PC-3 (cell line): ENCODE measurements at regions of chr2 and their contacts with region 1.

Region 1: DNA sequence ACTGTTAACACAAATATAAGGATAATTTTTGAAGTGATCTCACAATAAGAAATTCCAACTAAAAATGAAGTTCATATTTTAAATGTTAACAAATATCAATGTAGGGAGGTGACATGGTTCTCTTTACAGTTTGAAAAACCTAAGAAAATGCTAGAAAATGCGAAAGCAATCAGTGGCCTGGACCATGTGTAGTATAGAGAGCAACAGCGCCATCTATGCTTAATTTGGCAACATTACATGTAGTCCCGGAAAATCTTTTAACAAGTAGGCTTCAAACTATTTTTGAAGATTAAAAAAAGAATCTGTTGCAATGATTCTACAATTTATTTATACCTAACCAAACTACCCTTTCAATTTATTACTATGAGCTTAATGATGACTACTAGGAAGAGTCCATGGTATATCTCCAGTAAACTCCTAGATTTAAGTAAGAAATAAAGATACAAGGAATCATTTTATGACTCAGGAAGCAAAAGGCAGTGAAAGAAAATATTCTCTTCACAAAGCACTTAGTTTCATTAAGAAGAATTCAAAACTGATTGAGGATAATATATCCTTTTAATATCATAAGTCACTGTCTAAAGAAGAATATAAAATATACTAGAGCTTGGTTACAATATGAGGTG is 33.3 kb downstream of the NDUFA10 start:
- DNase-seq: peak; percentile 65
- ATAC-seq: peak; percentile 49
- H3K4me3 ChIP-seq: no peak overlapping the region
- H3K27ac ChIP-seq: no peak overlapping the region
- H3K4me1 ChIP-seq: no peaks in the 10 kb centered on the region
- H3K27me3 ChIP-seq: no peaks in the 10 kb centered on the region
- CTCF ChIP-seq: peak; percentile 88

Region 2: GRCh38 chr2:239889641-239890121 is 102.1 kb before region 1 on chr2:
- CTCF ChIA-PET with region 1: no interaction called
- POLR2A ChIA-PET with region 1: no interaction called
- intact Hi-C with region 1: loop called (anchors 5 kb)
- DNase-seq: no peak
- ATAC-seq: no peak
- H3K4me3 ChIP-seq: no peak overlapping the region
- H3K27ac ChIP-seq: no peak overlapping the region
- H3K4me1 ChIP-seq: no peaks in the 10 kb centered on the region
- H3K27me3 ChIP-seq: 0 out of 2 replicates have a peak, but pooled peaks cover 10% of the 10 kb centered on the region
- CTCF ChIP-seq: no peak

Region 3: DNA sequence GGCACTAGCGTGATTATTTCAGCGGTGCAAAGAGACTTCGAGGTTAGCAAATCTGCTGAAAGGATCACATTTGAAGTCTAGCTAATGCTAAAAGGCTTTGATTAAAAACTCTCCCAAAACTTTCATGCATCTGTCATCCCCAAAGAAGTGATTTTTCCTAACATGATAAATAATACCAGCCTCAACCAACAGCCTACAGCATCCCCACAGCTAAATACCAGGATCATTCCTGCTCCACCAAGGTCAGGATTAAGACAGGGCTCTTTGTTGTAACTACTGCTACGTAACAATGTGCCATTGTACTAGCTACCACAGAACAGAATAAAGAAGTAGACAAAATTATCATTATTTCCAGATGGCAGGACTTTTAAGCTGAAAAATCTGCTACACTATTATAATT is 59.9 kb after region 1 on chr2:
- CTCF ChIA-PET with region 1: no interaction called
- POLR2A ChIA-PET with region 1: no interaction called
- intact Hi-C with region 1: no loop called
- DNase-seq: no peak
- ATAC-seq: no peak
- H3K4me3 ChIP-seq: no peak overlapping the region
- H3K27ac ChIP-seq: no peak overlapping the region
- H3K4me1 ChIP-seq: no peaks in the 10 kb centered on the region
- H3K27me3 ChIP-seq: peaks cover 99% of the 10 kb centered on the region
- CTCF ChIP-seq: no peak